Activated CD4-positive, alpha-beta memory T cell treated with anti-CD3 and anti-CD28 coated beads for 36 hours (primary cell): ENCODE measurements at regions of chr18 and their contacts with region 1.

Region 1: GRCh38 chr18:26656944-26657536 is 108.7 kb upstream of the KCTD1 start:
- DNase-seq: no peak
- H3K4me3 Mint-ChIP-seq: peak overlapping the region; percentile 61
- H3K27ac Mint-ChIP-seq: no peak overlapping the region
- H3K4me1 Mint-ChIP-seq: peaks cover 12% of the 10 kb centered on the region
- H3K27me3 Mint-ChIP-seq: peaks cover 53% of the 10 kb centered on the region

Region 2: GRCh38 chr18:26307189-26307773 is 349.8 kb before region 1 on chr18:
- CTCF ChIA-PET with region 1: no interaction called
- POLR2A ChIA-PET with region 1: no interaction called
- intact Hi-C with region 1: loop called (anchors 10 kb)
- DNase-seq: no peak
- H3K4me3 Mint-ChIP-seq: no peak overlapping the region
- H3K27ac Mint-ChIP-seq: no peak overlapping the region
- H3K4me1 Mint-ChIP-seq: no peaks in the 10 kb centered on the region
- H3K27me3 Mint-ChIP-seq: no peaks in the 10 kb centered on the region

Region 3: GRCh38 chr18:26642440-26643348 is 14.3 kb before region 1 on chr18:
- CTCF ChIA-PET with region 1: no interaction called
- POLR2A ChIA-PET with region 1: no interaction called
- intact Hi-C with region 1: no loop called
- DNase-seq: no peak
- H3K4me3 Mint-ChIP-seq: no peak overlapping the region
- H3K27ac Mint-ChIP-seq: no peak overlapping the region
- H3K4me1 Mint-ChIP-seq: no peaks in the 10 kb centered on the region
- H3K27me3 Mint-ChIP-seq: peaks cover 10% of the 10 kb centered on the region

Region 4: GRCh38 chr18:26677957-26678356 is 20.9 kb after region 1 on chr18:
- CTCF ChIA-PET with region 1: no interaction called
- POLR2A ChIA-PET with region 1: no interaction called
- intact Hi-C with region 1: no loop called
- DNase-seq: no peak
- H3K4me3 Mint-ChIP-seq: no peak overlapping the region
- H3K27ac Mint-ChIP-seq: no peak overlapping the region
- H3K4me1 Mint-ChIP-seq: no peaks in the 10 kb centered on the region
- H3K27me3 Mint-ChIP-seq: peaks cover 3% of the 10 kb centered on the region